ENCODE measurements at regions of chr10 and their contacts with region 1.

Region 1: GRCh38 chr10:97686962-97687784 is at the start of gene AVPI1:
- DNase-seq: peak; percentile 98
- total RNA-seq, gene AVPI1: 6.3 TPM

Region 2: DNA sequence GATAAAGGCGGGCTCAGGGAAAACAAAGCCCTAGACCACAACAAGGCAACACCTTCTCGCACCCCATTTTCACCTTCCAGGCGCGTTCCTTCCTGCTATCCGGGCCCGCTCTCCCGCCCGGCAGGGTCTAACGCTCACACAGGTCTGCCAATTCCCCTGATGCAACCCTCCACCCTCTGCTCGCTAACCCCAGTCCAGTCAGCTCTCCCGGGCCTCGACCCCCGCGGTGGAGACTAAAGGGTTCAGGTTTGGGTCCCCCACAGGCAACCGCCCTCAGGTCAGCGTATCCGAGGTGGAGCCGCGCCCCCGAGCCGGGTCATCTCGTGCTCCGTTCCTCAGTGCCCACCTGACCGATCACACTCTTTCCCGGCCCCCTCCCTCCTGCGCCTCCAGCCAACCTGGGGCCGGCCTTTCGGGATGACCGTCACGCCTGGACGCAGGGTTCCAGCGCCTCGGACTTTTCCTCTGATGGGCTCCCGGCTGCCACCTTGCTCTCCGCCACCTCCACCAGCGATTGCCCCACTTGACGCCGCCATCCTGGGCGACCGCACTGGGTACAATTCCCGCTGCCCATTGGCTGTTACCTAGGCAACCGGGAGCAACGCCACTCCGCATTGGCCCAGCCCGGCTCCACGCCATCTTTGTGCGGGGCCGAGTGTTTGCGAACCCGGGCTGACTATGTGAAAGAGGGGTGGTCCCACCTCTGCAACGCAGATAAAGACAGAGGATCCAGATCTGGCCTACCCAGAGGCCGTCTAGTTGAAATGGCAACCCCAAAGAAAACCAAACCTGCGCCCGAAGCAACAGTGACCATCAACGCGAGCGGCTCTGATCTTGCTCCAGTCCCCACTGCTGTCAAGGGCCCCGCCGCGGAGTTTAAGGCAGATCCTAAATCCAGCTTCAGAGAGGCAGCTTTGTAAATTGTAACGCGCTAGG is 54.0 kb before region 1 on chr10 and contains the start of gene MORN4:
- intact Hi-C with region 1: loop called (anchors 10 kb)
- DNase-seq: peak; percentile 94
- total RNA-seq, gene MORN4: 17.7 TPM

Region 3: GRCh38 chr10:97659589-97659988 is 27.6 kb before region 1 on chr10:
- intact Hi-C with region 1: no loop called
- DNase-seq: no peak

Region 4: DNA sequence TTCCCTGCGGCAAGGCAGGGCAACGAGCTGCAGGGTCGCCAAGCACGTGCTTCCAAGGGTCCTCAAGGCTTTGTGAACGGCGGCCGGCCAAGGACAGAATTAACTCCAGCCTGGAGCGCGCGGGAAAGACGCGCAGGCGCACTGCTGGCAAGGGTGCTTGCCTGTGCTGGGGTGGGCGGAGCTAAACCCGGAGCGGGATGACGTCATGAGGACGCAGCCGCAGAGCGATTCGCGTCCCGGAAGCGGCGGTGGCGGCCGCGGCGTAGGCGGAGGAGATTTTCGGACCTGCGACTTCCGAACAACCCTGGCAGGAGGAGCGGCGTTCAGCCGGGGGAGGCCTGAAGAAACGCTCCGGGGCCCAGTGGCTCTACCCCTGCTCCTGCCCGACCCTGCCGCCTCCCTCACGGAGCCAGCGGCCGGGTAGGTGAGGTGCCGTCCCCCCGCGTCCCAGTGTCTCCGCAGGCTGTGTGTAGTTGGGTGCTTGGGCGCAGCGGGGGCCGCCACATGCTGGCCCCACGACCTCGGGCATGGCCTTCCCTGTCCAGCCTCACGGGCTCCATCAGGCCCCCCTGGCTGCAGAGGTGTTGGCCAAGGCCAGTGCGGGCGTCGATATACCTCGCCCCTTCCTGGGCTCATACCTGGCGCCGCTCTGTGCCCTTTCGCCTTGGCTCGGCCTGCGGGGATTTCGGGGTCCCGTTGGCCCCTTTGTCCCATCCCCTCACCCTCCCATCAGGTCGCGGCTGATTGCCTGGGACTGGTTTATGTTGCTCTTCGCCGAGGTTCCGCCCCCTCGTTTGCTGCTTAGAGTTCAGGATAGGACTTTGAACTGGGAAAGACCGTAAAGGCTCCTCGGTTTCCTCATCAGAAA is 50.0 kb after region 1 on chr10 and contains the start of gene ZFYVE27:
- intact Hi-C with region 1: loop called (anchors 2 kb)
- DNase-seq: peak; percentile 98
- total RNA-seq, gene ZFYVE27: 19.8 TPM